Ovary (tissue), 10 donors: ENCODE measurements at regions of chr20 and their contacts with region 1.

Region 1: DNA sequence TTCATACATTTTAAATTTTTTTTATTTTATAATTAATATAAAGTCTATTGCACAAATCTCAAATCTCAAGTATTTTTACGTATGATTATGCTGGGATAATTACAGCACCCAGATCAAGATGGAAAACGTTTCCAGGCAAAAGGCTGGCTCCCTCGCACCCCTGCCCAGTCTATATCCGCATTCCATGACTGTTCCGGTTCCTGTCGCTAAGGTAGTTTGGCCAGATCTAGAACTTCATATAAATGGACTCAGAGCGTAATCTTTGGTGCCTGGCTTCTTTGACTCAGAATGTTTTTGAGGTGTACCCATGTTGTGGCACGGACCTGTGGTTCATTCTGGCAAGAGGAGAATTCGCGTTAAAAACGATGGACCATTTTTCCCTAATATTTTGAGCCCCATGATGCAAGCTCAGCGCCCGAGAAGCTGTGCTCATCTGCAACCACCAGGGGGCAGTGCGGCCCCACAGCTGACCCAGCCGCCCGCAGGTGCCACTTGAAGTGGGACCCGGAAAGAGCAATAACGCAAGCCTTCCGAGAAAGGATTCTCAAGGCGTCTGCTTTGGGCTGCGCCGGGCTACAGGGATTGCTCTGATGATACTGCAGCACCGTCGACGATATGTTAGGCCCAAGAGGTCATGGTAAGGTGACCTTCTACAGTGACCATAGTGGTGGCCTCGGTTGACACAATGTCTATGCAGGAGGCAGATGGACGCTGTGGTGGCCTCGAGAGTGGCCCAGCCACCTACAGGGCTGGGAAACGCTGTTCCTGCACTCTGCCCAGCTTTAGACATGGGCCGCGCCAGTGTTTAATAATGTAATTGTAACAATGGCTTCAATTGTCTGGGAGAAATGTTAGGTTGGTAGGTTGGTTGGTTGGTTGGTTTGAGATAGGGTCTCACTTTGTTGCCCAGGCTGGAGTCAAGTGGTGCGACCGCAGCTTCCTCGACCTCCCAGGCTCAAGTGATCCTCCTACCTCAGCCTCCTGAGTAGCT is 160.1 kb downstream of the ZMYND8 start:
- DNase-seq: peak; percentile 56 to 81 (median 73)
- H3K4me3 ChIP-seq: no peak overlapping the region
- H3K27ac ChIP-seq: no peak overlapping the region
- H3K4me1 ChIP-seq: no peaks in the 10 kb centered on the region
- H3K27me3 ChIP-seq: no peaks in the 10 kb centered on the region
- CTCF ChIP-seq: peak; percentile 79 to 90 (median 85)
- EP300 ChIP-seq: no peak
- POLR2A ChIP-seq: no peak

Region 2: GRCh38 chr20:46757754-46758678 is 438.4 kb before region 1 on chr20:
- intact Hi-C with region 1: no loop called
- DNase-seq: peak in 4 of 5 donors; percentile 31 to 53 (median 40)
- H3K4me3 ChIP-seq: no peak overlapping the region
- H3K27ac ChIP-seq: no peak overlapping the region
- H3K4me1 ChIP-seq: no peaks in the 10 kb centered on the region
- H3K27me3 ChIP-seq: no peaks in the 10 kb centered on the region
- CTCF ChIP-seq: peak in 2 of 3 donors; percentile 13 to 24
- EP300 ChIP-seq: no peak
- POLR2A ChIP-seq: no peak

Region 3: DNA sequence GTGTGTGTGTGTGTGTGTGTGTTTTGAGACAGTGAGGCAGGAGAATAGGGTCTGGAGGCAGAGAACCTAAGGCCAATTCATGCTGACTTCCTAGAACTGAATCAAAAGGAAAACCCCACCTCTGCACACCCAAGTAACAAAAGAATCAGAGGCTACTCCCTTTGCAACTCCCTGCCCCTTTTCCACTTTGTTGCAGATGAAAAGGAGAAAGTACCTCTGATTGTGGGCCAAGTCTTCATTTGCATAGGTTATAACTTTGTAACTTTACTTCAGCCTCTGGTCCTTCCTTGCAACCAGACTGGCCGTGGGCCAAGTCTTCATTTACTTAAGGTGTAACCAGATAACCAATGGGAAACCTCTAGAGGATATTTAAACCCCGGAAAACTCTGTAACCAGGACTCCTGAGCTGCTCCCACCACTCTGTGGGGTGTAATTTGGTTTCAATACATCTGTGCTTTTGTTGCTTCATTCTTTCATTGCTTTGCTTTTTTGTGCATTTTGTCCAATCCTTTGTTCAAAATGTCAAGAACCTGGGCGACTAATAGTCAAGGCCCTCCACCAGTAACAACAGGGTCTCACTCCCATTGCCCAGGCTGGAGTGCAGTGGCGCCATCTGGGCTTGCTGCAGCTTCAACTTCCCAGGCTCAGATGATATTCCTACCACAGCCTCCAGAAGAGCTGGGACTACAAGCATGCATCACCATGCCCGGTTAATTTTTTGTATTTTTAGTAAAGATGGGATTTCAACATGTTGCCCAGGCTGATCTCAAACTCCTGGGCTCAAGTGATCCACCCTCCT is 132.8 kb before region 1 on chr20:
- intact Hi-C with region 1: no loop called
- DNase-seq: no peak
- H3K4me3 ChIP-seq: no peak overlapping the region
- H3K27ac ChIP-seq: no peak overlapping the region
- H3K4me1 ChIP-seq: no peaks in the 10 kb centered on the region
- H3K27me3 ChIP-seq: no peaks in the 10 kb centered on the region
- CTCF ChIP-seq: no peak
- EP300 ChIP-seq: no peak
- POLR2A ChIP-seq: no peak

Region 4: GRCh38 chr20:47610247-47610944 is 414.0 kb after region 1 on chr20:
- intact Hi-C with region 1: loop called in 1 of 4 experiments (anchors 10 kb)
- DNase-seq: peak in 1 of 5 donors; percentile 28
- H3K4me3 ChIP-seq: no peak overlapping the region
- H3K27ac ChIP-seq: no peak overlapping the region
- H3K4me1 ChIP-seq: no peaks in the 10 kb centered on the region
- H3K27me3 ChIP-seq: no peaks in the 10 kb centered on the region
- CTCF ChIP-seq: no peak
- EP300 ChIP-seq: no peak
- POLR2A ChIP-seq: no peak

Region 5: GRCh38 chr20:47620808-47621805 is 424.7 kb after region 1 on chr20:
- intact Hi-C with region 1: loop called in 1 of 4 experiments (anchors 5 kb)
- DNase-seq: no peak
- H3K4me3 ChIP-seq: no peak overlapping the region
- H3K27ac ChIP-seq: no peak overlapping the region
- H3K4me1 ChIP-seq: no peaks in the 10 kb centered on the region
- H3K27me3 ChIP-seq: no peaks in the 10 kb centered on the region
- CTCF ChIP-seq: peak; percentile 65 to 78 (median 66)
- EP300 ChIP-seq: no peak
- POLR2A ChIP-seq: no peak